PC-9 (cell line): ENCODE measurements at regions of chr6 and their contacts with region 1.

Region 1: DNA sequence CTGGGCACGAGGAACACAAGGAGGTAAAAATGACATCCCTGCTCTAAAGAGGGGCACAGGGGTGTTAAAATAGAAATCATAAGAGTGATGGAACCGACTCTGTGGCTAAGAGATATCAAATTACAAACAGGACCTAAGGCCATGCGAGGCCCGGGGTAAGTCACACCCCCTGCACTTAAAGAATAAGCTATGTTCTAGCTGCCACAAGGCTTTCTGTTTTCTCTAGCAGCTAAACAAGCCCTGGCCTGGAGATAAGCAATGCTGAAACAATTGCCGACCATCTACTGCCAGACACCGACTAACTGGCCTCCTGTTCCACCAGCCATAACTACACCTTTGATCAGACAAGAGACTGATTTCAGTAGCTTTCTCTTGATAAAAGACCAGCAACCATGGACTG is 32.4 kb downstream of the MDGA1 start:
- DNase-seq: peak; percentile 38
- H3K4me3 ChIP-seq: no peak overlapping the region
- H3K27ac ChIP-seq: no peak overlapping the region
- H3K4me1 ChIP-seq: peaks cover 41% of the 10 kb centered on the region
- H3K27me3 ChIP-seq: no peaks in the 10 kb centered on the region
- CTCF ChIP-seq: no peak

Region 2: GRCh38 chr6:37704066-37704465 is 38.8 kb after region 1 on chr6:
- CTCF ChIA-PET with region 1: no interaction called
- POLR2A ChIA-PET with region 1: interaction called, 19 read pairs
- intact Hi-C with region 1: no loop called
- DNase-seq: no peak
- H3K4me3 ChIP-seq: no peak overlapping the region
- H3K27ac ChIP-seq: no peak overlapping the region
- H3K4me1 ChIP-seq: no peaks in the 10 kb centered on the region
- H3K27me3 ChIP-seq: peaks cover 15% of the 10 kb centered on the region; the same call in 1 of the 2 replicates
- CTCF ChIP-seq: no peak

Region 3: GRCh38 chr6:37819177-37819823 is 154.0 kb after region 1 on chr6 and contains the start of gene ZFAND3:
- CTCF ChIA-PET with region 1: no interaction called
- POLR2A ChIA-PET with region 1: no interaction called
- intact Hi-C with region 1: no loop called
- DNase-seq: peak; percentile 81 to 97
- H3K4me3 ChIP-seq: peak within 1 kb of the TSS; percentile 94
- H3K27ac ChIP-seq: peak within 1 kb of the TSS; percentile 66
- H3K4me1 ChIP-seq: peaks cover 24% of the 10 kb centered on the region
- H3K27me3 ChIP-seq: no peaks in the 10 kb centered on the region
- CTCF ChIP-seq: no peak
- total RNA-seq, gene ZFAND3: 37.9 and 46.8 TPM in 2 replicates